Heart left ventricle (tissue), 16 donors: ENCODE measurements at regions of chr2 and their contacts with region 1.

Region 1: DNA sequence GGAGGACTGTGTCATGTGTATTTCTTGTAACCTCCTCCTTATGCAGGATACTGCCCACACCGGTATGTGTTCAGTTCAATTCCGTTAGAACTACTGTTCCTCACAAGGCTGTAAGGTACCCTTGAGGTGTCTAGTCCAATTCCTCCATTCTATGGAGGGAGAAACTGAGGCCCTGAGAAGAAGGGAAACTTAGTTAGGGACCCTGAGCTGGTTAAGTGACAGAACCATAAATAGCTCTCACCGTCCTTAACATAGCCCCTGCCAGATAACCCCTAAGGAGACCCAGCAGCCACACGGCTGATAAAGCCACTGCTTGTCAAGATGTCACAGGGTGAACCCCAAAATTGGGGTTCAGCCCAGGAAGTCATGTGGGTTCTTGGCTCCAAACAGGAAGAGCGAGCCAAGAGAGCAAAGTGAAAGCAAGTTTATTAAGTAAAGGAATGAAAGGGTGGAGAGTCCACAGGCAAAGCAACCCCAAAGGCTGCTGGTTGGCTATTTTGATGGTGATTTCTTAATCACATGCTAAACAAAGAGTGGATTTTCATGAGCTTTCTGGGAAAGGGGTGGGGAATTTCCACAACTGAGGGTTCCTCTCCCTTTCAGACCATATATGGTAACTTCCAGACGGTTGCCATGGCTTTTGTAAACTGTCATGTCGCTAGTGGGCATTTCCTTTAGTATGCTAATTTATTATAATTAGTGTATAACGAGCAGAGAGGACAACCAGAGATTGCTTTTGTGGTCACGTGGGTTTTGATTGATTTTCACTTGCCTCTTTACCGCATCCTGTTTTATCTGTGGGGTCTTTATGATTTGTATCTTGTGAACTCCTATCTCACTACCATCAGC is 83.4 kb upstream of the RTN4 start:
- DNase-seq: peak in 4 of 5 donors; percentile 30 to 52 (median 38)
- ATAC-seq: peak; percentile 40 to 84 (median 78)
- H3K4me3 ChIP-seq: peak overlapping the region in 10 of 12 donors; percentile 13 to 54 (median 40)
- H3K27ac ChIP-seq: peak overlapping the region in 8 of 12 donors; percentile 51 to 87 (median 65)
- H3K4me1 ChIP-seq: peaks cover 0 to 51% (median 6%) of the 10 kb centered on the region in 12 donors
- H3K27me3 ChIP-seq: no peaks in the 10 kb centered on the region
- CTCF ChIP-seq: no peak
- POLR2A ChIP-seq: no peak

Region 2: GRCh38 chr2:55026202-55026601 is 107.5 kb before region 1 on chr2:
- intact Hi-C with region 1: no loop called
- DNase-seq: no peak
- ATAC-seq: peak in 2 of 4 donors; percentile 49 to 50
- H3K4me3 ChIP-seq: no peak overlapping the region
- H3K27ac ChIP-seq: peak overlapping the region in 1 of 12 donors; percentile 9
- H3K4me1 ChIP-seq: peaks cover 0 to 86% (median 44%) of the 10 kb centered on the region in 12 donors
- H3K27me3 ChIP-seq: no peaks in the 10 kb centered on the region
- CTCF ChIP-seq: no peak
- POLR2A ChIP-seq: no peak

Region 3: DNA sequence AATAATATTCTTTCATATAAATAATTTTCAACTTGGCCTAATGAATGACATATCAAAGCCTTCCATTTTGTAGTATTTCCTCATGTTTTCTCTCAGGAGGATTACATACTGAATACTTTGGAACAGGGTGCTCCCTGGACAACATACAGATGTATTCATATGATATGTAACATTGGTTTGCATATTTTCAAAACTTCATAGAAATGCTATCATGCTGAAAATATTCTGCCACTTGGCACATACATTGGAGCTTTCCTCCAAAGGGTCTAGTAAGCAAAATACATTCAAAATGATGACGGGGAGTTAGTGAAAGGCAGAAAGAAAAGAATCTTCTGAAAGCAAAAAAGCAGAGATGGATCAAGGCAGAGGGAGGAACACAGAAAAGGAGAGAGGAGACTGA is 45.3 kb before region 1 on chr2:
- intact Hi-C with region 1: loop called in 1 of 10 experiments (anchors 10 kb)
- DNase-seq: no peak
- ATAC-seq: no peak
- H3K4me3 ChIP-seq: no peak overlapping the region
- H3K27ac ChIP-seq: peak overlapping the region in 3 of 12 donors; percentile 50 to 73 (median 61)
- H3K4me1 ChIP-seq: peaks cover 0 to 21% (median 3%) of the 10 kb centered on the region in 12 donors
- H3K27me3 ChIP-seq: no peaks in the 10 kb centered on the region
- CTCF ChIP-seq: no peak
- POLR2A ChIP-seq: no peak

Region 4: DNA sequence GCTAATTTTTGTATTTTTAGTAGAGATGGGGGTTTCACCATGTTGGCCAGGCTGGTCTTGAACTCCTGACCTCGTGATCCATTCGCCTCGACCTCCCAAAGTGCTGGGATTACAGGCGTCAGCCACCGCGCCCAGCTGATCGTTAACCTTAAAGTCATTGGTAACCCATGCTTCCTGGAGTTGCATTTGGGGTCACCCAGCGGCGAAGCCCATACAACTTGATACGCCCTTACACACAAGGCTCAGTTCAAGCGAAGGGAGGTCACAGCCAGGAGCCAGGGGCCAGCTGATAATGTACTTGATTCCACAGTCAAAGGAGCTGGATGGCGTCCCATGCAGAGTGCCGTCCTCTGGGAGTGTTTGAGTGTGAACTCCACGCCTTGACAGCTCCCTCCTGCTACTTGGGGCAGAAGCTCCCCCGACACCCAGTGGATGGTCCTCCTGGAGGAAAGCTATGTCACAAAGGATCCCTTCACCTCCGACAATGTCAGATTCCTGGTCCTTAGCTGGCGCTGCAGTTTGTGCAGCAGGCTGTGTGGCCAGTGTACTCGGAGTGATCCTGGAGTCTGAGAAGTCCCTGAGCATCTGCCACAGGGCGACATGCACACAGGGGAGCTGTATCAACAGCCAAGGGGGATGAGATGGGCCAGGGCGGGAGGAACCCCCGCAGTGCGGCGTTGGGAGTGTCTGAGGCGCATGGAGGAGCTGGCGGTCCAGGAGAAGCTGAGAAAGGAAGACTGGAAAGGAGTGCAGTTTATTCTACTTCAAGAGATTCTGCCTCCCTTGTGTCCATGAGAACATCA is 90.5 kb after region 1 on chr2:
- intact Hi-C with region 1: no loop called
- DNase-seq: peak in 2 of 5 donors; percentile 17 to 30
- ATAC-seq: peak; percentile 21 to 28 (median 24)
- H3K4me3 ChIP-seq: peak overlapping the region in 10 of 12 donors; percentile 44 to 94 (median 82)
- H3K27ac ChIP-seq: peak overlapping the region; percentile 76 to 97 (median 91)
- H3K4me1 ChIP-seq: peaks cover 0 to 28% (median 3%) of the 10 kb centered on the region in 12 donors
- H3K27me3 ChIP-seq: no peaks in the 10 kb centered on the region
- CTCF ChIP-seq: no peak
- POLR2A ChIP-seq: no peak

Region 5: DNA sequence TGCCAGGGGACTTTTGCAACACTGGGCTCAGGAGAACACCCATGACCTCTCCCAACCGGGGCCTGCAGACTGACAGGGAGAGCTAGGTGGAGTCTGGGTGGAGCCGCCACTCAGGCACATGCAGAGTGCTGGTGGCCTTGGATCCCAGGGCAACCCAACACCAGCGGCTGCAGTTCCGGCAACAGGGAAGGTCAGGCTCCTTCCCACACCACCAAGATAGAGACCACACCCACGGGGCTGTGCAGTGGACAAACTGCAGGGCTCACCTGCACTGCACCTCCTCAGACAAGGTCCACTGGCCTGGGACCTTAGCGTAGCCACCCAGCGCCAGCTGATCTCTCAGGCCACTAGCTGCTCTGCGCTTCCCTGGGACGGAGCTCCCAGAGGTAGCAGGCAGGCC is 690.9 kb after region 1 on chr2:
- intact Hi-C with region 1: no loop called
- DNase-seq: no peak
- ATAC-seq: peak in 1 of 4 donors; percentile 39
- H3K4me3 ChIP-seq: no peak overlapping the region
- H3K27ac ChIP-seq: no peak overlapping the region
- H3K4me1 ChIP-seq: no peaks in the 10 kb centered on the region
- H3K27me3 ChIP-seq: no peaks in the 10 kb centered on the region
- CTCF ChIP-seq: no peak
- POLR2A ChIP-seq: no peak